Caco-2 (cell line): ENCODE measurements at regions of chr4 and their contacts with region 1.

Region 1: GRCh38 chr4:3880615-3881120 is 114.5 kb downstream of the ADRA2C start:
- DNase-seq: peak; percentile 72 to 83
- H3K4me3 ChIP-seq: no peak overlapping the region
- H3K4me3 Mint-ChIP-seq: no peak overlapping the region
- H3K27ac Mint-ChIP-seq: no peak overlapping the region
- H3K4me1 ChIP-seq: no peaks in the 10 kb centered on the region
- H3K4me1 Mint-ChIP-seq: no peaks in the 10 kb centered on the region
- H3K27me3 ChIP-seq: no peaks in the 10 kb centered on the region
- H3K27me3 Mint-ChIP-seq: peaks cover 17% of the 10 kb centered on the region
- CTCF ChIP-seq: peak; percentile 73 to 77

Region 2: GRCh38 chr4:3572363-3572762 is 308.3 kb before region 1 on chr4:
- CTCF ChIA-PET with region 1: no interaction called
- POLR2A ChIA-PET with region 1: no interaction called
- intact Hi-C with region 1: loop called (anchors 5 kb)
- DNase-seq: no peak
- H3K4me3 ChIP-seq: no peak overlapping the region
- H3K4me3 Mint-ChIP-seq: no peak overlapping the region
- H3K27ac Mint-ChIP-seq: no peak overlapping the region
- H3K4me1 ChIP-seq: no peaks in the 10 kb centered on the region
- H3K4me1 Mint-ChIP-seq: no peaks in the 10 kb centered on the region
- H3K27me3 ChIP-seq: no peaks in the 10 kb centered on the region
- H3K27me3 Mint-ChIP-seq: no peaks in the 10 kb centered on the region
- CTCF ChIP-seq: no peak

Region 3: DNA sequence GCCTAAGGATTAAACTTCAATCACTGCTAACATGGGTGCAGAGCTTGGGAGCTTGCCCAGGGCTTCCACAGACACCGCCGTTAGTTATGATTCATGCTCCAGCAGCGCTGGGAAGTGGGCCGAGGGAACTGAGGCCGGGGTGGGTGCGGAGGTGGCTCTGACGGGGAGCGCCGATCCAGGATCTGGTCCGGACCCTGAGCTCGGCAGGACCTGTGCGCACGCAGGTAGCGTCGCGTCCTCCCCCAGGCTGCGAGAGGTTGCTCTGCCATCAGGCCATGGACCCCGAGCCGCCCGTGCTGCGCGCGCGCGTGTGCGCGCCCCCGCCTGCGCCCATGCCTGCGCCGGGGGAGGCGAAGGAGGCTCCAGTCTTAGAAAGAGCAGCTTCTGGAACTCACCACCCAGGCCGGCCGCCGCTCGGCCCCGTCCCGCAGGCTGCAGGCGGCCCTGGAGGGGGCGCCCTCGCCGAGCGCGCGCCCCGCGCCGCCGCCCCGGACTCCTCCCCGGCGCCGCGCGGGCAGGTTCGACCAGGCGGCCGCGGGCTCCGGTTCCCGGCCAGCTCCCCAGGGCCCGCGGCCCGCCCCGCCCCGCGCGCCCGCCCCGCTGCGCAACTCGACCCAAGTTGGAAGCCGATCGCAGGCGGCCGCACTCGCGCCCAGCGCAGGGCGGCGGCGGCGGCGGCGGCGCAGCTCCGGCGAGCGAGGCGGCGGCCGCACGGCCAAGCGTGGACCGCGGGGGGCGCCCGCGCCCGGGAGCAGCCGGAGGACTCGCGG is 115.2 kb before region 1 on chr4:
- CTCF ChIA-PET with region 1: interaction called, 36 read pairs
- POLR2A ChIA-PET with region 1: no interaction called
- intact Hi-C with region 1: loop called (anchors 1 kb)
- DNase-seq: peak in 1 of 2 experiments; percentile 78
- H3K4me3 ChIP-seq: peak overlapping the region; percentile 30
- H3K4me3 Mint-ChIP-seq: peak overlapping the region; percentile 55
- H3K27ac Mint-ChIP-seq: no peak overlapping the region
- H3K4me1 ChIP-seq: peaks cover 5% of the 10 kb centered on the region; the same call in 1 of the 2 replicates
- H3K4me1 Mint-ChIP-seq: no peaks in the 10 kb centered on the region
- H3K27me3 ChIP-seq: no peaks in the 10 kb centered on the region
- H3K27me3 Mint-ChIP-seq: peaks cover 2% of the 10 kb centered on the region
- CTCF ChIP-seq: peak in 1 of 2 experiments; percentile 8

Region 4: DNA sequence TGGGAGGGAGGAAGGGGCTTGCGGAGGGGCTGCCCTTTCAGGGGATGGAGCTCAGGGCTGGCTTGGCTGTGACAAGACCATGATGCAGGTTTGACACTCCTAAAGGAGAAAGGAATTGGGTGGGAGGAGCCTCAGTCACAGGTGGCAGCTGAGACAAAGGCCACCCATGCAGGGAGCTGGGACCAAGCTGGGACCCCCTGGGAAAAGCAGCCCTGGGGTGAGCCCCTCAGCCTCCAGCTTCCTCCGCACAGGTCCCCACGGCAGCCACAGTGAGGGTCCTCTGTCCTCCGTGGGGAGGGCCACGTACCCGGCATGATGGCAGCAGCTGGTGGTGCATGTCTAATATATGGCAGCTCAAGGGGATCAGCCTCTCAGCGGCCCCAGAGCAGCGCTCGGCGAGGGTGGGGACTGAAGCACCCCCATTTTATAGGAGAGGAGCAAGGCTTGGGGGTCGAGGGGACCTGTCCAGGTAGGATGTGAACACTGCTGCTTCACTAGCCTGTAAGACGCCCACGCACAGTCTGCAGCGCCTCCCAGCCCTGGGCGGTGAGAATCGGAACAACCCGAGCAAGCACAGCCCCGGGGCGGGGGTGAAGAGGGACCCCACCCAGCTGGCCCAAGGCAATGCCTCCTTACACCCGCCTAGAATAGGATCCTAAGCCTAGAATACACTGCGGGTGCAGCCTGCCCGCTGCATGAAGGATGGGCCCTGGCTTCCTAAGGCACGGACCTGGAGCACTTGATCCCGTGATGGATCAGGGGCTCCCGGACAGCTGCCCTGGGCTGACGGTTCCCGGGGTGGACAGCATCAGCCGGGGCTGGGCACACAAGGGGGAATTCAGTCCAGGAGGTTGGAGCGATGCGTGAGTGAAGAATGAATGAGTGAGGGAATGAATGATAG is 97.0 kb before region 1 on chr4:
- CTCF ChIA-PET with region 1: interaction called, 15 read pairs
- POLR2A ChIA-PET with region 1: interaction called, 3 read pairs
- intact Hi-C with region 1: no loop called
- DNase-seq: peak; percentile 59 to 63
- H3K4me3 ChIP-seq: no peak overlapping the region
- H3K4me3 Mint-ChIP-seq: peak overlapping the region; percentile 24
- H3K27ac Mint-ChIP-seq: peak overlapping the region; percentile 63
- H3K4me1 ChIP-seq: peaks cover 32% of the 10 kb centered on the region
- H3K4me1 Mint-ChIP-seq: no peaks in the 10 kb centered on the region
- H3K27me3 ChIP-seq: no peaks in the 10 kb centered on the region
- H3K27me3 Mint-ChIP-seq: no peaks in the 10 kb centered on the region
- CTCF ChIP-seq: peak in 1 of 2 experiments; percentile 66

Region 5: DNA sequence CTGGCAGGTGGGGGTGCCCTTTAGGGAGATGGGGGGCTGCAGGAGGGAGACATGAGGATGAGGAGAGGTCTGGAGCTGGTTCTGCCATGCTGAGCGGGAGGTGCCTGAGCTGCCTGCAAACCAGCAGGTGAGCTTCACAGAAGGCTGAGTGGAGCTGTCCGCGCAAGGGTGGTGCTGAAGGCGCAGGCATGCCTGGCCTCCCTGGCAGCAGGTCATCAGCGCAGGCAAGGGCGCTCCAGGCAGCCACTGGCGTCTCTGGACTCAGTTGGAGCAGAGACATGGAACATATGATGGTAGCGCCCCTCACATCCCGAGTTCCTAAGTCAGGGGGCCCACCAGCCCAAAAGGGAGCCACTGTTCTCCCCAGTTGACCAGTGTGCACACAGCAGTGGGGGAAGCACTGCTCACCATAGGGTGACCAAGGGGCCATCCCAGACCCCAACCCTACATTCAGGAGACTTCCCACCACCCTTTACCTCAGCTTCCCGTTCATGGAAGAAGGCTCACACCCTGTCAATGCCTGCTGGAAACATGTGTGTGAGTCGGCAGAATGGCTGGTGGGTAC is 88.6 kb before region 1 on chr4:
- CTCF ChIA-PET with region 1: interaction called, 11 read pairs
- POLR2A ChIA-PET with region 1: no interaction called
- intact Hi-C with region 1: no loop called
- DNase-seq: peak; percentile 73 to 85
- H3K4me3 ChIP-seq: no peak overlapping the region
- H3K4me3 Mint-ChIP-seq: no peak overlapping the region
- H3K27ac Mint-ChIP-seq: no peak overlapping the region
- H3K4me1 ChIP-seq: no peaks in the 10 kb centered on the region
- H3K4me1 Mint-ChIP-seq: no peaks in the 10 kb centered on the region
- H3K27me3 ChIP-seq: no peaks in the 10 kb centered on the region
- H3K27me3 Mint-ChIP-seq: peaks cover 4% of the 10 kb centered on the region
- CTCF ChIP-seq: no peak

Region 6: DNA sequence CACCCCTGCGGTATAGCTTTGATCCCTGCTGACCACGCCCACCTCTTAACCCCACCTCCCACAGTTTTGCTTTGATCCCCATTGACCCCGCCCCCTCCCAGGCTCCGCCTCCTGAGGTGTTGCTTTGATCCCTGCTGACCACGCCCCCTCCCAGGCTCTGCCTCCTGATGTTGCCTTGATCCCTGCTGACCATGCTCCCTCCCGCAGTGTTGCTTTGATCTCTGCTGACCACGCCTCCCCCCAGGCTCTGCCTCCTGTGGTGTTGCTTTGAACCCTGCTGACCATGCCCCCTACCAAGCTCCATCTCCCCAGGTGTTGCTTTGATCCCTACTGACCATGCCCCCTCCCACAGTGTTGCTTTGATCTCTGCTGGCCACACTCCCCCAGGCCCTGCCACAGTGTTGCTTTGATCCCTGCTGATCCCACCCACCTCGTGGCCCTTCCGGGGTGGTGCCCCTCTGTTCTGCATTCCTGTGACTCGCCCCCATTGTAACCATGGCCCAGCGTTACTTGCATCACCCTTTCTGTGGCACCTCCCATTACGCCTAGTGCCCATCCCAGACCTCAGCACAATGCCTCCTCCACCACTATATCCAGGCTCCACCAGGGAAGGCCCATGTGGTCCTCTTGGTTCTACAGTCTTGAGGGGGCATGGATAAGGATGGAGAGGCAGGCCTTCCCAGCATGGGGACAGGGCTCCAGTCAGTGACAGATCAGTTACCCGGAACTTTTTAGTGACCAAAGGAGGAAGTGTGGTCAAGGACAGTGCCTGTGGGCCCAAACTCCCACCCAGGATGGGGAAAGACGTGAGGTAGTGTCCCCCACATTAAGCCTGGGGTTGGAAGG is 43.7 kb before region 1 on chr4:
- CTCF ChIA-PET with region 1: interaction called, 12 read pairs
- POLR2A ChIA-PET with region 1: interaction called, 13 read pairs
- intact Hi-C with region 1: no loop called
- DNase-seq: peak; percentile 62 to 64
- H3K4me3 ChIP-seq: no peak overlapping the region
- H3K4me3 Mint-ChIP-seq: no peak overlapping the region
- H3K27ac Mint-ChIP-seq: no peak overlapping the region
- H3K4me1 ChIP-seq: no peaks in the 10 kb centered on the region
- H3K4me1 Mint-ChIP-seq: no peaks in the 10 kb centered on the region
- H3K27me3 ChIP-seq: no peaks in the 10 kb centered on the region
- H3K27me3 Mint-ChIP-seq: peaks cover 2% of the 10 kb centered on the region
- CTCF ChIP-seq: no peak

Region 7: DNA sequence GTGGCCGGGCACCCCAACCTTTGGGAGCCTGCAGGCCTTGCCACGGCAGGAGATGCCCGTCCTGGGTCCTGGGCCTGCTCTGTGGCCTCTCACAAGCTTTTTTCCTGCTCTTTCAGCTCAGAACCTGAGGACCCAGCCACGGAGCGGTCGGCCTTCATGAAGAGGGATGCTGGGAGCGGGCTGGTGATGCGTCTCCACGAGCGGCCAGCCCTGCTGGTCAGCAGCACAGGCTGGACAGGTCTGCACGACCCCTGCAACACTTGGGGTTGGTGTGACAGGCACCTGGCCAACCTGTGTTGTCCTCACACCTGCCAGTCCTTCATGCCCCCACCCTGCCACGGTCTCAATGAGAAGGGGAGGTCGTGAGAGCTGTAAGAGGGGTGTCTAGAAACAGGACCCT is 55.5 kb after region 1 on chr4:
- CTCF ChIA-PET with region 1: no interaction called
- POLR2A ChIA-PET with region 1: no interaction called
- intact Hi-C with region 1: no loop called
- DNase-seq: no peak
- H3K4me3 ChIP-seq: no peak overlapping the region
- H3K4me3 Mint-ChIP-seq: no peak overlapping the region
- H3K27ac Mint-ChIP-seq: no peak overlapping the region
- H3K4me1 ChIP-seq: no peaks in the 10 kb centered on the region
- H3K4me1 Mint-ChIP-seq: no peaks in the 10 kb centered on the region
- H3K27me3 ChIP-seq: no peaks in the 10 kb centered on the region
- H3K27me3 Mint-ChIP-seq: no peaks in the 10 kb centered on the region
- CTCF ChIP-seq: no peak